GM12878 (cell line): ENCODE measurements at regions of chr6 and their contacts with region 1.

Region 1: GRCh38 chr6:12289933-12290820 is at the start of gene EDN1:
- DNase-seq: peak; percentile 51
- ATAC-seq: peak; percentile 84
- H3K4me3 ChIP-seq: peak within 1 kb of the TSS; percentile 88
- H3K27ac ChIP-seq: peak within 1 kb of the TSS; percentile 54
- H3K4me1 ChIP-seq: peaks cover 8% of the 10 kb centered on the region
- H3K27me3 ChIP-seq: no peaks in the 10 kb centered on the region
- CTCF ChIP-seq: peak; percentile 51 to 66 (median 55)
- EP300 ChIP-seq: no peak; a peak in 1 of 4 replicates
- POLR2A ChIP-seq: peak; percentile 57; the same call in 1 of the 2 replicates
- RAD21 ChIP-seq: peak; percentile 50
- polyA plus RNA-seq, gene EDN1: 2.0 to 2.5 TPM

Region 2: DNA sequence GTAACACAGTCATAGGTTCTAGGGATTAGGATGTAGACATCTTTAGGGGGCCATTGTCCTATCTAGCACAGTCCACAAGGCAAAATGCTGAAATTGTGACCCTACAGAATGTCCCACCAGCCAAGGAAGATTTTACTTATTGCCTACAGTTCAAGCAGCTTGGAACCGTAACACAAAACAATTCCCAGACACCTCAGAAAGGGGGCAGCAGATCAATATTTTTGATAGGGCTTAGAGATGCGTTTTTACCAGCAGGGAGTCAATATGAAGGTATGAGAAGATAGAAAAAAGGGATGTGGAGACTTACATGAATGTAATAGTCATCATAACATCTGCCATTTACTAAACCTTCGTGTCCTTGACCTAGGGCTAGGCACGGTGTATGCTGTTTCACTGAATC is 671.6 kb before region 1 on chr6:
- CTCF ChIA-PET with region 1: interaction called, 34 read pairs
- POLR2A ChIA-PET with region 1: interaction called, 3 read pairs
- RAD21 ChIA-PET with region 1: interaction called, 13 read pairs
- SMC1A ChIA-PET with region 1: interaction called, 7 read pairs
- in situ Hi-C with region 1: no loop called
- intact Hi-C with region 1: loop called (anchors 1 kb)
- DNase-seq: peak; percentile 13
- ATAC-seq: peak; percentile 92
- H3K4me3 ChIP-seq: no peak overlapping the region
- H3K27ac ChIP-seq: no peak overlapping the region
- H3K4me1 ChIP-seq: no peaks in the 10 kb centered on the region
- H3K27me3 ChIP-seq: no peaks in the 10 kb centered on the region
- CTCF ChIP-seq: peak; percentile 36 to 53 (median 51)
- EP300 ChIP-seq: no peak
- POLR2A ChIP-seq: no peak
- RAD21 ChIP-seq: peak; percentile 67; the same call in 1 of the 2 replicates

Region 3: DNA sequence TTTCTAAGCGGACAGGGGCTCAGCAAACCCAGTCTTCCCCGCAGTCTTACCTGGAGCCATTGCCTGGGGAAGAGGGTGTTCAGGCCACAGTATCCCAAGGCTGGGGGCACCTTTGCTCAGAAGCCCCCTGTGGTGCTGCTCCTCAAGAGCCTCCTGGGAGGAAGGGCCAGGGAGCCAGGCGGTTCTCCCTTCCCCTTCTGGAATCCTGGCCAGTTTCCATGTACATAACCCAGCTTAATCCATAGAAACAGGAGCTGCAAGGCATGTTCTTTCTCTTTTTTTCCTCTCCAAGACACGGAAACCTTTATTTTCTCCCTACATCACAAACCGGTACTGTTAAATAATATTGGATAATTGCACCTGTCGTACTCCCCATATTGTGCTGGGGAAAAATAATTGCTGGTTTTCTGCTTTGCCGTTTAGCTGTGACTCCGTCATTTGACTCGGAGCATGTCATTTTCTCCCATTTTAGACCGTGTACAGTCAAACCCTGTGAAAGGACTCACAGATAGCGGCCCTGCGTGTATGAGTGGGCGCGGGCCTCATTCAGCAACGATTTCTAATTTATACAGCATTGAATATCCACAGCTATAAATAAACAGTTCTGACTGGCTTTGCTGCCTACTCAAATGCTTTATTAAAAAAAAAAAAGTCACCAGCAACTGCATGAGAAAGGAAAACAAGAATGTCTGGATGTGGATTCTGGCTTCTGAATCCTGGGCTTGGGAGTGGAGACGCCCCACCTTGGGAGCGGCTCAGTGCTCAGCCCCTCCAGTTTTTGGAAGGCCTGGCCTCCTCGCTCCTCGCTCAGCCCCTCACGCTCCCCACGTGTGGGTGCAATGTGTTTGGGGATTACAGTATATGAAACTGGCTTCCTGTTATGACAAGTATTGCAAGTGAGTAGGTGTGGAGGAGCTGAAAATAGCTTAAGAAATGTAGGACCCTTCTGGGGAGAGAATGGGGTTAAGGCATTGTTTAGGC is 578.9 kb before region 1 on chr6:
- CTCF ChIA-PET with region 1: interaction called, 6 read pairs
- POLR2A ChIA-PET with region 1: interaction called, 6 read pairs
- RAD21 ChIA-PET with region 1: interaction called, 24 read pairs
- SMC1A ChIA-PET with region 1: interaction called, 3 read pairs
- in situ Hi-C with region 1: no loop called
- intact Hi-C with region 1: loop called (anchors 5 kb)
- DNase-seq: peak; percentile 67
- ATAC-seq: peak; percentile 62
- H3K4me3 ChIP-seq: peak overlapping the region; percentile 17; the same call in 1 of the 2 replicates
- H3K27ac ChIP-seq: peak overlapping the region; percentile 75
- H3K4me1 ChIP-seq: peaks cover 45% of the 10 kb centered on the region
- H3K27me3 ChIP-seq: no peaks in the 10 kb centered on the region
- CTCF ChIP-seq: no peak
- EP300 ChIP-seq: peak; percentile 73 to 78; a peak in 2 of 4 replicates
- POLR2A ChIP-seq: 0 out of 2 replicates have a peak, but pooled peaks have one; percentile 32
- RAD21 ChIP-seq: peak; percentile 15; the same call in 1 of the 2 replicates

Region 4: GRCh38 chr6:12075067-12075563 is 215.1 kb before region 1 on chr6:
- CTCF ChIA-PET with region 1: interaction called, 6 read pairs
- POLR2A ChIA-PET with region 1: no interaction called
- RAD21 ChIA-PET with region 1: interaction called, 4 read pairs
- SMC1A ChIA-PET with region 1: interaction called, 3 read pairs
- in situ Hi-C with region 1: no loop called
- intact Hi-C with region 1: loop called (anchors 10 kb)
- DNase-seq: no peak
- ATAC-seq: peak; percentile 63
- H3K4me3 ChIP-seq: no peak overlapping the region
- H3K27ac ChIP-seq: no peak overlapping the region
- H3K4me1 ChIP-seq: peaks cover 3% of the 10 kb centered on the region
- H3K27me3 ChIP-seq: no peaks in the 10 kb centered on the region
- CTCF ChIP-seq: peak; percentile 30 to 53 (median 40); a peak in 4 of 6 replicates
- EP300 ChIP-seq: no peak
- POLR2A ChIP-seq: no peak
- RAD21 ChIP-seq: peak; percentile 65

Region 5: DNA sequence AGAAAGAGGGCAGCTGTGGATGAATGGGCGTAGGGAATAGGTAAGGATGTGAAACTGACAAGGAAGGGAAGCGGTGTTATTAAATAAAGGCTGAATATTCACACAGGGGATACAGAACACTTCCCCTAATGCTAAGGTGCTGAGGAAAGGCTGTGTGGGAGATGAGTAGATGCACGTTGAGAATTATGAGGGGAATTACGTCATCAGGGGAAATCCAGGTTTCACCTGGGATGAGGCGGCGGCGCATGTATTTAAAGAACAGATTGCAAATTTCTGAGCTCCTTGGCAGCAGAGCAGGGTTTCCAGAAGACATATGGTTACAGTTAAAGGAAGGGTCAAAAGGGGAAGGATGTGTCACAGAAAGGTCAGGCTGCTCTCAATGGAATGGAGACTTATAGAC is 28.7 kb before region 1 on chr6:
- CTCF ChIA-PET with region 1: no interaction called
- POLR2A ChIA-PET with region 1: no interaction called
- RAD21 ChIA-PET with region 1: interaction called, 11 read pairs
- SMC1A ChIA-PET with region 1: interaction called, 4 read pairs
- in situ Hi-C with region 1: no loop called
- intact Hi-C with region 1: no loop called
- DNase-seq: peak; percentile 26
- ATAC-seq: peak; percentile 82
- H3K4me3 ChIP-seq: no peak overlapping the region
- H3K27ac ChIP-seq: no peak overlapping the region
- H3K4me1 ChIP-seq: peaks cover 5% of the 10 kb centered on the region
- H3K27me3 ChIP-seq: no peaks in the 10 kb centered on the region
- CTCF ChIP-seq: no peak
- EP300 ChIP-seq: no peak
- POLR2A ChIP-seq: no peak
- RAD21 ChIP-seq: no peak

Region 6: GRCh38 chr6:12383448-12383847 is 93.3 kb after region 1 on chr6:
- CTCF ChIA-PET with region 1: interaction called, 3 read pairs
- POLR2A ChIA-PET with region 1: no interaction called
- RAD21 ChIA-PET with region 1: interaction called, 6 read pairs
- SMC1A ChIA-PET with region 1: interaction called, 11 read pairs
- in situ Hi-C with region 1: no loop called
- intact Hi-C with region 1: loop called (anchors 5 kb)
- DNase-seq: peak; percentile 72
- ATAC-seq: peak; percentile 98
- H3K4me3 ChIP-seq: no peak overlapping the region
- H3K27ac ChIP-seq: no peak overlapping the region
- H3K4me1 ChIP-seq: peaks cover 11% of the 10 kb centered on the region
- H3K27me3 ChIP-seq: no peaks in the 10 kb centered on the region
- CTCF ChIP-seq: no peak
- EP300 ChIP-seq: peak; percentile 65 to 72; a peak in 2 of 4 replicates
- POLR2A ChIP-seq: no peak
- RAD21 ChIP-seq: no peak

Region 7: DNA sequence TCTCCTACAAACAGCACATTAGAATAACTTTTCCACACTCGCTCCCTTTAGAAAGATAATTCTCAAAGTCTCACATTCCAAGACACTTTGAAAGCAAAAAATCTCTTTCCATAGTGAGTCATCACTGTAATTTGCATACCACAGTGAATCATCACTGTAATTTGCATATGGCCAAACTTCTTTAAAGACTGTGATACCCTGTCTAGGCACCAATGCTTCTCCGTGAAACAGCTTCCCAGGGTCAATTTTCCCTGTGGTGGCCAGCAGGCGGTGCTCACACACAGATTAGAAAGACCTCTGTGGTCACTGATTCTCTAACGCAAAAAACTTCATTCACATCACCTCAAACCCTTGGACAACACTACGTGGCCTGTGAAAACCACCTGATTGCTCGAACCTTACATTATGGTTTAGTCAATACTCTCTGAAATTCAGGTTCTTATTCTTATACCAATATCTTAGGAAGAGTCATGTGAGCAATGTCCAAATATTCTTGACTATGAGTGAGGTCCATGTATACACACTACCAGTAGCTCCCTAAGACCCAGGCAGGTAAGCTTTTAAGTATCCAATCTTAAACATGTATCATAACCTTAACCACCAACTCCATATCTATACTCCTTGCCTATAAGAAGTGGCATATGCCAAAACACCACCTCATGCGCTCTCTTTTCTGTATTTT is 347.9 kb after region 1 on chr6:
- CTCF ChIA-PET with region 1: interaction called, 13 read pairs
- POLR2A ChIA-PET with region 1: no interaction called
- RAD21 ChIA-PET with region 1: interaction called, 5 read pairs
- SMC1A ChIA-PET with region 1: interaction called, 6 read pairs
- in situ Hi-C with region 1: no loop called
- intact Hi-C with region 1: no loop called
- DNase-seq: peak; percentile 16
- ATAC-seq: peak; percentile 94
- H3K4me3 ChIP-seq: no peak overlapping the region
- H3K27ac ChIP-seq: no peak overlapping the region
- H3K4me1 ChIP-seq: no peaks in the 10 kb centered on the region
- H3K27me3 ChIP-seq: no peaks in the 10 kb centered on the region
- CTCF ChIP-seq: peak; percentile 77 to 87 (median 80)
- EP300 ChIP-seq: no peak
- POLR2A ChIP-seq: no peak
- RAD21 ChIP-seq: peak; percentile 82